ENCODE measurements at regions of chr3 and their contacts with region 1.

Region 1: GRCh38 chr3:99686955-99687612 is 48.7 kb downstream of the COL8A1 start:
- DNase-seq: peak; percentile 42
- H3K4me3 ChIP-seq: no peak overlapping the region
- H3K27ac ChIP-seq: no peak overlapping the region
- H3K4me1 ChIP-seq: no peaks in the 10 kb centered on the region
- H3K27me3 ChIP-seq: no peaks in the 10 kb centered on the region
- CTCF ChIP-seq: peak; percentile 73 to 84

Region 2: DNA sequence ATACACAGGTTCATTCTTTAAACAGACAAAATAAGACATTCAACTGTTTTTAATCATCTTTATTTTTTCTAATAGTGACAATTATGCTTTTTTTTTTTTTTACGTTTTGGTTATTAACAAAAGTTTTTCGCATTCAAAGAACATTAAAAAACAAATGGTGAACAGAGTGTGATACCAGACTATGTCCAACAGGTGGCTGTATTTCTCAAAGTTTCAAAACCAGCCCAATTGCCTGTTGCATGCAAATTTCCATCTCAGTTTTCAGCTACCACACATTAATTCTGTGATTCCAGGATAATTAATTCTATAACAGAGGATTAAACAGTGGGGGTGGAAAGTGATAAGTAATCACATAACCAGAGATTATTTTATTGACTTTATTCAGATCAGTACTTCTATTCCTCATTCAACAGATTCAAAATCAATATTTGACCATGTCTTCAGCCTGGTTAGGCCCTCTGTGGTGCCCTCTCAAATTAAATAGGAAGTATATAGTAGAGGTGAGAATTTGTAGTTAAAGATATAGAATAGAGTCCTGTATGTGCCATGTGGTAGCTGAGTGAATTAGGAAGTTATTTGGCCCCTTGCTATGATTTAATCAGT is 663.4 kb before region 1 on chr3:
- CTCF ChIA-PET with region 1: no interaction called
- dilution Hi-C with region 1: no loop called
- in situ Hi-C with region 1: no loop called
- intact Hi-C with region 1: loop called (anchors 2 kb)
- DNase-seq: peak; percentile 34
- H3K4me3 ChIP-seq: no peak overlapping the region
- H3K27ac ChIP-seq: no peak overlapping the region
- H3K4me1 ChIP-seq: no peaks in the 10 kb centered on the region
- H3K27me3 ChIP-seq: no peaks in the 10 kb centered on the region
- CTCF ChIP-seq: peak; percentile 56 to 68

Region 3: DNA sequence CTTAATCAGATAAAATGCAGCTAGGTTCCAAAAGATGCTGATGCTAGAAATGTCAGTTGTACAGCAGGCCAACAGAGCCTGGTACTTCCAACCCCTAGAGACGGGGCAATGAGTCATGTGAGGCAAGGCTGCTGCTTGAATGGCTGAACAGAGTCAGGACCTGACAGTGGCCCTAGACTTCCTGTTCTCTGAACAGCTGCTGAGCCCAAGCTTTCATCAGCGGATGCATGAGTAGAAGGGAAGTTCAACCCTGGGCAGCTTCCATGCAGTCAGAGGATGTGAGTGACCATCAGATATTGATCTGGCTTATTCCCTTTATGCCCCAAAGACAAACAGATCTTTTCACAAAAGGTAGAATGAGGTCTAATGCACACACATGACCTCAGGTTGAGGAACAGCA is 331.6 kb before region 1 on chr3:
- CTCF ChIA-PET with region 1: no interaction called
- dilution Hi-C with region 1: no loop called
- in situ Hi-C with region 1: no loop called
- intact Hi-C with region 1: no loop called
- DNase-seq: no peak
- H3K4me3 ChIP-seq: no peak overlapping the region
- H3K27ac ChIP-seq: no peak overlapping the region
- H3K4me1 ChIP-seq: no peaks in the 10 kb centered on the region
- H3K27me3 ChIP-seq: no peaks in the 10 kb centered on the region
- CTCF ChIP-seq: no peak

Region 4: GRCh38 chr3:99499235-99500158 is 187.6 kb before region 1 on chr3:
- CTCF ChIA-PET with region 1: interaction called, 6 read pairs
- dilution Hi-C with region 1: no loop called
- in situ Hi-C with region 1: no loop called
- intact Hi-C with region 1: loop called (anchors 1 kb)
- DNase-seq: peak; percentile 28
- H3K4me3 ChIP-seq: no peak overlapping the region
- H3K27ac ChIP-seq: no peak overlapping the region
- H3K4me1 ChIP-seq: no peaks in the 10 kb centered on the region
- H3K27me3 ChIP-seq: no peaks in the 10 kb centered on the region
- CTCF ChIP-seq: peak; percentile 84 to 88

Region 5: GRCh38 chr3:99544786-99545281 is 142.2 kb before region 1 on chr3:
- CTCF ChIA-PET with region 1: no interaction called
- dilution Hi-C with region 1: no loop called
- in situ Hi-C with region 1: no loop called
- intact Hi-C with region 1: loop called (anchors 5 kb)
- DNase-seq: peak; percentile 39
- H3K4me3 ChIP-seq: no peak overlapping the region
- H3K27ac ChIP-seq: no peak overlapping the region
- H3K4me1 ChIP-seq: peaks cover 41% of the 10 kb centered on the region
- H3K27me3 ChIP-seq: no peaks in the 10 kb centered on the region
- CTCF ChIP-seq: no peak

Region 6: DNA sequence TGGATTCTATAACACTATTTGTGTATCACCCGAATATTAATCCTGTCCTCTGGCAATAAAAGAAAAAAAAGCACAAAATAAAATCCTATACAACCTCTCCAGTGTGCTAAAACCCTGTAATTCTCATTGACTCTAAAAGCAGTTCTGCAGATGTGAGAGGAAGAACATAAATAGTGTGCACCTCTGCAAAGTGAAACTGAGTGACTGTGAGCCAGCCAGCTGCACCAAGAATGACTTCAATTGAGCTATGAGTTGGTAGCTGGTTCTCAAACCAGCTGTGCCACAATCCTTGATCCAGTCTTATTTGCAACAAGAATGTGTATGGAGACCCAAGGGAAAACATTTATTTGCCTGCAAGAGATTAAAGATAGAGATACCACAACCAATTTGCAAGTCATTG is 79.9 kb before region 1 on chr3:
- CTCF ChIA-PET with region 1: no interaction called
- dilution Hi-C with region 1: no loop called
- in situ Hi-C with region 1: no loop called
- intact Hi-C with region 1: no loop called
- DNase-seq: no peak
- H3K4me3 ChIP-seq: no peak overlapping the region
- H3K27ac ChIP-seq: no peak overlapping the region
- H3K4me1 ChIP-seq: no peaks in the 10 kb centered on the region
- H3K27me3 ChIP-seq: no peaks in the 10 kb centered on the region
- CTCF ChIP-seq: no peak

Region 7: GRCh38 chr3:99627062-99627826 is 59.8 kb before region 1 on chr3:
- CTCF ChIA-PET with region 1: no interaction called
- dilution Hi-C with region 1: no loop called
- in situ Hi-C with region 1: no loop called
- intact Hi-C with region 1: no loop called
- DNase-seq: peak; percentile 18
- H3K4me3 ChIP-seq: no peak overlapping the region
- H3K27ac ChIP-seq: no peak overlapping the region
- H3K4me1 ChIP-seq: peaks cover 23% of the 10 kb centered on the region
- H3K27me3 ChIP-seq: no peaks in the 10 kb centered on the region
- CTCF ChIP-seq: peak in 1 of 2 donors; percentile 3

Region 8: GRCh38 chr3:99638167-99638948 is 48.7 kb before region 1 on chr3 and contains the start of gene COL8A1:
- CTCF ChIA-PET with region 1: no interaction called
- dilution Hi-C with region 1: no loop called
- in situ Hi-C with region 1: loop called (anchors 5 kb)
- intact Hi-C with region 1: no loop called
- DNase-seq: peak; percentile 83
- H3K4me3 ChIP-seq: peak within 1 kb of the TSS; percentile 48 to 71 (median 67)
- H3K27ac ChIP-seq: peak within 1 kb of the TSS; percentile 84
- H3K4me1 ChIP-seq: peaks cover 28% of the 10 kb centered on the region
- H3K27me3 ChIP-seq: no peaks in the 10 kb centered on the region
- CTCF ChIP-seq: no peak
- total RNA-seq, gene COL8A1: 11.9 to 73.2 TPM

Region 9: DNA sequence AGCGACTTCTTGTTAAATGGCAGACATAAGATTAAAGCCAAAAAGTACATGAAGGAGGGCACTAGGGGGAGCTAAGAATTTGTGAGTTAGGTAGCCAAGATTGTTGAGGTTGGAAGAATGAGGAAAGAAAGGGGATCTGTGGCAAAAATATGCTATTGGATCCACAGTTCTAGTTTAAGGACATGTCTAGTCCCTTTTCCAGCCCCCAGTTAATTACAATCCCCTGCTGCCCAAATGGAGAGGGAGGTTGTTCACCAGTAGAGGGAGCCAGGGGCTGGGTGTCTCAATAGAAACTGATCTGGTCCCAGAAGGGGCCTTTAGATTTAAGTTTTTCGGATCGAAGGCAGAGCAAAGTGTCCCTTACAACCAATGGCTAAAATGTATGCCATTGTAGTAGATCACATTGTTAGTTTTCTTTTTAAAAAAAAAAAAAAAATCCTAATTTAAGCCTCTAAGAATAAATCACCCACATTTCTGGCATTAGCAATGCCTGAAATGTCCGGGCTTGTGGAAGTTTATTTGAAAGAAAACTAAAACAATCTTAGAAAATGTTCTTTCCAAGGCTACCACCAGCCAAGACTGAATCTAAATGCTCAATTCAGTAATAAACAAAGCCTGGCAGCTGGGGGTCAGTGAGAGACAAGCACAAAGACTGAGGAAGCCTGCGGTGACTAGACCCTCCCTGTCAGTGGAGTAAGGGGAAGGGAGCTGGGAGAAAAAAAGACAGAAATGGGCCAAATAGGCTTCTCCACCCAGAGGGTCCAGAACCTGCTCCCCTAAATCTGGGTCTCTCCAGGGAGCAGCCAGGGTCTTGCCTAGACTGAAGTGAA is 41.6 kb before region 1 on chr3:
- CTCF ChIA-PET with region 1: interaction called, 9 read pairs
- dilution Hi-C with region 1: no loop called
- in situ Hi-C with region 1: loop called (anchors 5 kb)
- intact Hi-C with region 1: loop called (anchors 1 kb)
- DNase-seq: peak; percentile 43
- H3K4me3 ChIP-seq: no peak overlapping the region
- H3K27ac ChIP-seq: peak overlapping the region; percentile 59
- H3K4me1 ChIP-seq: peaks cover 30% of the 10 kb centered on the region
- H3K27me3 ChIP-seq: no peaks in the 10 kb centered on the region
- CTCF ChIP-seq: peak; percentile 64 to 86